Activated naive CD4-positive, alpha-beta T cell treated with anti-CD3 and anti-CD28 coated beads, Interleukin-2, amount 10 ng/mL, durations not matched to agents 7 days and 5 days (primary cell): ENCODE measurements at regions of chr11 and their contacts with region 1.

Region 1: DNA sequence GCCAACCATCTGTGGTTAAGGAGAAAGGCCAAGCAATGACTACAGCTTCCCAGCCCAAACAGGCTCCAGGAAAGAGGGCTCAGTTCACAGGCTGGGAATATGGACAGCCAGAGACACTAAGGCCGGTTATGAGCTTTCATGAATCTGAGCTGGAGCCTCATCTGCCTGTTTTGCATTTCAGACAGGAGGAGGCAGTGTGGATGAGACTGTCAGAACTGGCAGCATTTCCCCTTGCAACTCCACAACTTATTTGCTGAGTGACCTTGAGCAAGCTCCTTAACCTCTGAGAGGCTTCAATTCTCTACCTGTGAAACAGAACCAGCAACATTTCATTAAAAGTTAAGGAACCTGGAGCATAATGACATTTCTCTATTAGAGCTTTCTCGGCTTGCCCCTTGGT is 264.0 kb downstream of the ETS1 start:
- DNase-seq: peak; percentile 69
- H3K4me3 Mint-ChIP-seq: no peak overlapping the region
- H3K27ac Mint-ChIP-seq: peak overlapping the region; percentile 96
- H3K4me1 Mint-ChIP-seq: peaks cover 91% of the 10 kb centered on the region
- H3K27me3 Mint-ChIP-seq: no peaks in the 10 kb centered on the region

Region 2: DNA sequence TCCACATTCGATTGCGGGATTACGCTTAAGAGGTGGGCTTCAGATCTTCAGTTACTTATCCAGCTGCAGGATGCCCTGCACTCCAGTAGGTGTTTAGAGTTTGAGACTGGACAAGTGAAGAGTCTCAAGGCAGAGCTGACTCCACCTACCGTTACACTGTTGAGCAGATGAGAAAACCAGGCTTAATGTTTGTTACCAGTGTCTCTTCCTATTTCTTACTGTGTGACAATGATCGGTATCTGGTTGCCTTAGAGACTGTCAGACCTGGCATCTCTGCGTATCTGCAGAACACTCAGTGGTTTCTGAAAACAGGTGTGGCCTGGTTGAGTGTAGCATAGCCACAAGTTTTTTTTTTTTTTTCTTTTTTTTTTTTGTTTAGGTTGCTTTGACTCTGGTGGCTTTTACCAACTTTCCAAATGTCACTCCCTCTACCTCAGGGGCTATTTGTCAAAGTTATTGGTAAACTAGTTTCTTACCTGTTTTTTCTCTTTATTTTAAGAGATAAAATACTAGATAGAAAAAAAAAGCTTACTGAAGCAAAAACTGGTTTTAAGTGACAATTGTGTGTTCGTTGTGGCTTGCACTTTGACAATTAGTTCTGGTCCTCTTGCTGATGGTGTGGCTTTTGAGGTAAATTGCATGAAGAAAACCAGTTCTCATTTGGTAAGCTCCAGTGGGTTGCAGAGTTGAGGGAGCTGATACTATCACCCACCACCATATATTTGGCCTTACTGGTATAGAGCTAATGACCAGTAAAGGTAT is 20.8 kb before region 1 on chr11:
- CTCF ChIA-PET with region 1: interaction called, 27 read pairs
- DNase-seq: peak; percentile 84
- H3K4me3 Mint-ChIP-seq: peak overlapping the region; percentile 87
- H3K27ac Mint-ChIP-seq: peak overlapping the region; percentile 99
- H3K4me1 Mint-ChIP-seq: peaks cover 89% of the 10 kb centered on the region
- H3K27me3 Mint-ChIP-seq: no peaks in the 10 kb centered on the region

Region 3: GRCh38 chr11:128342511-128343134 is 19.2 kb after region 1 on chr11:
- CTCF ChIA-PET with region 1: interaction called, 54 read pairs
- DNase-seq: peak; percentile 75
- H3K4me3 Mint-ChIP-seq: peak overlapping the region; percentile 68
- H3K27ac Mint-ChIP-seq: peak overlapping the region; percentile 99
- H3K4me1 Mint-ChIP-seq: peaks cover 74% of the 10 kb centered on the region
- H3K27me3 Mint-ChIP-seq: no peaks in the 10 kb centered on the region

Region 4: GRCh38 chr11:128472128-128473089 is 149.0 kb after region 1 on chr11:
- CTCF ChIA-PET with region 1: interaction called, 12 read pairs
- DNase-seq: peak; percentile 78
- H3K4me3 Mint-ChIP-seq: peak overlapping the region; percentile 47
- H3K27ac Mint-ChIP-seq: peak overlapping the region; percentile 92
- H3K4me1 Mint-ChIP-seq: peaks cover 98% of the 10 kb centered on the region
- H3K27me3 Mint-ChIP-seq: no peaks in the 10 kb centered on the region